Heart right ventricle (tissue), 16 donors: ENCODE measurements at regions of chrX and their contacts with region 1.

Region 1: DNA sequence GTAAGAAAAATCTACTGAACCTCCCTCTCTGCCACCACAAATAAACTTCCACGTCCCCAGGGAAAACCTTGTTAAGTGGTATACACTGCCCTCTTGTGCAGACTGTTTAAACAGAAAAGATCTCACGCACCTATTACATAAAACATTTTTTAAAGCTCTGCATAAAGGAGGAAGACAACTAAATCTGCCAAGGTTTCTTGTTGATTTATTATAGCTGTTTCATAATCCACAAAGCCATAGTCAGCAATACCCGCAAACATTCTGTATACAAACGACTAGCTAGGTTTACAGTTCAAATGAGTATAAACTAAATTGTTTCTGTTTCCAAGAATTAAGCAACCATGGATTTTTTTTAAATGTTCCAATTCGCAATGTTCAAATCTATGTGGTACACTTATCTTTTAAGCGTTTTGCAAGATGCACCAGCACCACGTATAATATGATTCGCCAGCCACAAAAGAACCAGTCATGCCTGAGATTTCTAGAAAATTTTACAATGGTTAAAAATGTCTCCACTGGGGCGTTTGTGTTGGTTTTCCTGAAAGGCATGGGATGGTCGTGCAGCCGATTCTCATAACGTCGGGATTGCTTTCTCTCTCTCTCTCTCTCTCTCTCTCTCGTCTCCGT is 164.6 kb downstream of the PRKX start:
- DNase-seq: peak in 1 of 2 donors; percentile 12
- ATAC-seq: peak in 7 of 8 donors; percentile 47 to 87 (median 71)
- H3K4me3 ChIP-seq: peak overlapping the region in 8 of 10 donors; percentile 7 to 45 (median 30)
- H3K27ac ChIP-seq: peak overlapping the region in 5 of 10 donors; percentile 42 to 56 (median 50)
- H3K4me1 ChIP-seq: peaks cover 0 to 9% (median 0%) of the 10 kb centered on the region in 9 donors
- H3K27me3 ChIP-seq: no peaks in the 10 kb centered on the region
- CTCF ChIP-seq: peak in 7 of 9 donors; percentile 25 to 62 (median 51)

Region 2: GRCh38 chrX:2526390-2526789 is 1022.5 kb before region 1 on chrX:
- intact Hi-C with region 1: loop called in 1 of 10 experiments (anchors 5 kb)
- DNase-seq: no peak
- ATAC-seq: no peak
- H3K4me3 ChIP-seq: no peak overlapping the region
- H3K27ac ChIP-seq: no peak overlapping the region
- H3K4me1 ChIP-seq: peaks cover 0 to 5% (median 0%) of the 10 kb centered on the region in 9 donors
- H3K27me3 ChIP-seq: peaks cover 0 to 6% (median 0%) of the 10 kb centered on the region in 7 donors
- CTCF ChIP-seq: no peak

Region 3: GRCh38 chrX:3119376-3119775 is 429.5 kb before region 1 on chrX:
- intact Hi-C with region 1: loop called in 2 of 10 experiments (anchors 5 to 10 kb)
- DNase-seq: no peak
- ATAC-seq: no peak
- H3K4me3 ChIP-seq: no peak overlapping the region
- H3K27ac ChIP-seq: no peak overlapping the region
- H3K4me1 ChIP-seq: no peaks in the 10 kb centered on the region
- H3K27me3 ChIP-seq: no peaks in the 10 kb centered on the region
- CTCF ChIP-seq: no peak

Region 4: GRCh38 chrX:3129256-3129655 is 419.6 kb before region 1 on chrX:
- intact Hi-C with region 1: loop called in 1 of 10 experiments (anchors 10 kb)
- DNase-seq: no peak
- ATAC-seq: no peak
- H3K4me3 ChIP-seq: no peak overlapping the region
- H3K27ac ChIP-seq: no peak overlapping the region
- H3K4me1 ChIP-seq: no peaks in the 10 kb centered on the region
- H3K27me3 ChIP-seq: no peaks in the 10 kb centered on the region
- CTCF ChIP-seq: no peak

Region 5: DNA sequence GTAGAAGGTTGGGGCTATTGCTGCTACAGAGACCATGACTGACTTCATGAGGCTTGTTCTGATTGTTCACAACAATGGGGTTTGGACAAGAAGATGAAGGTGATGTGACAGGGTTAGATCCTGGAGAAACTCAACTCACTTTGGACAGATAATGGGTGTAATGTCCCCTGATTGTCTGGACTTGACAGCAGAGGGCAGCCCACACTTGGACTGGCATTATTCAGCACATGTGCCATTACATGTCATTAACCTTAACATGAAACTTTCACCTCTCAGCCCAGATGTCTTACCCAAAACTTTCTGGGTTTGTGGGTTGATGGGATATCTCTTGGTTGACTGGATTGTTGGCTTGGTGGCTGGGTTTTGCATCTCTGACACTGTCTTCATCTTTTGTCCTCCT is 303.9 kb before region 1 on chrX:
- intact Hi-C with region 1: loop called in 2 of 10 experiments (anchors 2 to 5 kb)
- DNase-seq: no peak
- ATAC-seq: no peak
- H3K4me3 ChIP-seq: no peak overlapping the region
- H3K27ac ChIP-seq: no peak overlapping the region
- H3K4me1 ChIP-seq: peaks cover 0 to 5% (median 0%) of the 10 kb centered on the region in 9 donors
- H3K27me3 ChIP-seq: no peaks in the 10 kb centered on the region
- CTCF ChIP-seq: peak in 7 of 9 donors; percentile 19 to 41 (median 26)

Region 6: DNA sequence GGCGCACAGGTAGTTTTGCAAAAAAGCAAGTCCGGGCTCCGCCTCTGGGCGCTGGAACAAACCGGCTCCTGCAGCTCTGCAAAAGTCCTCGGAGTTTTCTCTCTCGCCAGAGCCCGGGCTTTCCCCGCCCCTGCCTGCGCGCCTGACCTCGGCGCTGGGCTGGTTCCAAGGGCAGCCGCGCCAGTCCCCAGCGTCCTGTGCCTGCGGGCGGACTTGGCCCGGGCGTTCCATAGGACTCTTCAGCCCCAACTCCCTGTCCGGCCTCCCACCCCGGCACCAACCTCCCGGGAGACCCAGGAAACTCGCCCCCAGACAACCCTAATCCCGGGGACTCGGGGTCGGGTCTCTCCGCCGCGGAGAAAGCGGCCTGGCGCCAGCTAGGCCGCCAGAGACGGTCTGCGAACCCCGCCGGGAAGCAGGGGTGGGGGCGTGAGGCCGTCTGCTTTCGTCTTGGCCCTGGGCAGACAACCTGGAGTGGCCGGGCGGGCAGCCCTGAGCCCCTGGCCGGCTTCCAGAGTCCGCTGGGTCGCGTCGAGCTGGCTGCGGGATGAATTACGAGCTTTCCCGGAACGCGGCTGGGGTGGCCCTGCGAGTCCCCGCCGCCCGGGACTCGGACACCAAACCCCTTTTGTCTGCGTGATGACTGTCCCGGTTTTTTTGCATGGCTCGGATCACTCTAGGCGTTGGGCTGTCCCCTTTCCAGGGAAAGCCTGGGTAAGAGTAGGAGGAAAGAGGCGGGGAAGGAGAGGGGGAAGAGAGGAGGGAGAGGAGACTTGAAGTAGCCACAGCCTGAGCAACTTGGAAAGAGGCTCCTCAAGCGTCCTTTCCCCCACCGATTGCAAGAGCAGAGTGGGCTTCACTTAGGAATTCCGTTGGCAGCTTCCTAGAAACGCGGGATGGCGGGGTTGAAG is 203.3 kb before region 1 on chrX:
- intact Hi-C with region 1: loop called in 1 of 10 experiments (anchors 10 kb)
- DNase-seq: peak; percentile 22 to 68
- ATAC-seq: peak; percentile 78 to 89 (median 86)
- H3K4me3 ChIP-seq: peak overlapping the region; percentile 18 to 60 (median 52)
- H3K27ac ChIP-seq: peak overlapping the region in 9 of 10 donors; percentile 53 to 89 (median 80)
- H3K4me1 ChIP-seq: peaks cover 0 to 14% (median 2%) of the 10 kb centered on the region in 9 donors
- H3K27me3 ChIP-seq: peaks cover 0 to 41% (median 0%) of the 10 kb centered on the region in 7 donors
- CTCF ChIP-seq: no peak

Region 7: DNA sequence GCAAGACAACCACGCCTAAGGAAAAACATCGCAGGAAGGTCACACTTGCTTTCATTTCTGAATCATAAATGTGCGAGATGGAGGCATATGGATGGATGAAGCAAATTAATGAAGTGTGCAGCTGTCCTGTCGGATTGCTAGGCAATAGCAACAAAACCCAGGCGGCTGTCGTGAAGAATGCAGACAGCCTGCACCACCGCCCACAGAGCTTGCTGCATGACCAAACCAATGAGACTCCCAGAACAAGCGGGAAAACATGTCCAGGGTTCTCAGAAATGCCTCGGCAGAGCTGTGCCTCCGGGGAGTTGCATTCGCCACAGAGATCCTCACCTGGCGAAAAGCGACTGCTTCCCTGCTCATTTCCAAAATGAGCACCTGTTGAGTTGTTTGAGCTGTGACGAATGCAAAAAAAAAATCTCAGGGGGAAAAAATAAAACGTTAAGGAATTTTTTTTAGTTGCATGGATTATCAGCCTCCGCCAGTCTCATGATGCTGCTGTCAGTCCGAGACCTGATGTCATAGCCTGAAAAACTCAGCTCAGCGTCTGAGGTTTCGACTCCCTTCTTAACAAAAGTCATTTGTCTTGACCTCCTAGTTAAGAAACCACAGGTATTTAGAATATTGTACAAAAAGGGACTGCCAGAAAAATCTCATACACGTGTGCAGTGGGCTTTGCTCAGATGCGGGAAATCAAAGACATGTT is 46.9 kb before region 1 on chrX:
- intact Hi-C with region 1: no loop called
- DNase-seq: peak in 1 of 2 donors; percentile 21
- ATAC-seq: peak in 6 of 8 donors; percentile 27 to 84 (median 54)
- H3K4me3 ChIP-seq: no peak overlapping the region
- H3K27ac ChIP-seq: peak overlapping the region in 4 of 10 donors; percentile 26 to 44 (median 31)
- H3K4me1 ChIP-seq: no peaks in the 10 kb centered on the region
- H3K27me3 ChIP-seq: no peaks in the 10 kb centered on the region
- CTCF ChIP-seq: no peak